Heart right ventricle (tissue), 16 donors: ENCODE measurements at regions of chr14 and their contacts with region 1.

Region 1: GRCh38 chr14:64880221-64881121 is 764 bp upstream of the SPTB start:
- DNase-seq: peak; percentile 35 to 52
- ATAC-seq: peak; percentile 55 to 85 (median 78)
- H3K4me3 ChIP-seq: peak overlapping the region; percentile 51 to 73 (median 64)
- H3K27ac ChIP-seq: peak overlapping the region; percentile 54 to 97 (median 88)
- H3K4me1 ChIP-seq: peaks cover 0 to 36% (median 12%) of the 10 kb centered on the region in 9 donors
- H3K27me3 ChIP-seq: peaks cover 0 to 97% (median 45%) of the 10 kb centered on the region in 7 donors
- CTCF ChIP-seq: no peak

Region 2: GRCh38 chr14:64671591-64671990 is 208.9 kb before region 1 on chr14:
- intact Hi-C with region 1: loop called in 2 of 10 experiments (anchors 10 kb)
- DNase-seq: peak in 1 of 2 donors; percentile 31
- ATAC-seq: peak in 7 of 8 donors; percentile 44 to 76 (median 54)
- H3K4me3 ChIP-seq: no peak overlapping the region
- H3K27ac ChIP-seq: peak overlapping the region in 1 of 10 donors; percentile 22
- H3K4me1 ChIP-seq: peaks cover 0 to 37% (median 0%) of the 10 kb centered on the region in 9 donors
- H3K27me3 ChIP-seq: no peaks in the 10 kb centered on the region
- CTCF ChIP-seq: peak; percentile 59 to 80 (median 77)

Region 3: DNA sequence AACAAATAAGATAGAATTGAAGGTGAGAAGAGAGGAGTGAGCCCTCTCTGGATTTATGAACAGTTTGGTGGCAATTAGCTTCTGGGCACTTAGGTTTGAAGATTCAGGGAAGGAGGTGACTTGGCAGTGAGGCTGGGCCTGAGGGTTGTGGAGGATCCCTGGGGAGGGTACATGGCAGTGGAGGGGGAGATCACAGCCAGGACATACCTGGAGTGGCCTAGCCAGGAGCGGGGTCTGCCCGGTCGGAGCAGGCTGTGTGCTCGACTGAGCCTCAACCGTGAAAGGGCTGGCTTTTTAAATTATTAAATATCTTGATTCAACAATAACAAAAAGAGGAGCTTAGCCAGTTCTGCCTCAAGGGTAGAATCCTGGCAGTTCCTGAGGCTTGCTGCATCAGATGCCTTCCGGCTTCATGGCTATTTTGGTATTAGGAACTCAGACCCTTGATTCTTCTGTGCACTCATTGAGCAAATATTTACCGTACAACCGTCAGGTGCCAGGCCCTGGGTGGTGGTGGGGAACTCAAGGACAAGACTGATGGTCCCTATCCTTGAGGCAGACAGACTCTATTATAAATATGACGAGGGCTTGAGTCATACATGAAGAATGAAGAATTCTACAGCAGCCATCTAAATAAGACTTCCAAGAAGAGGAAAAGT is 74.1 kb before region 1 on chr14:
- intact Hi-C with region 1: loop called in 1 of 10 experiments (anchors 5 kb)
- DNase-seq: no peak
- ATAC-seq: peak in 7 of 8 donors; percentile 27 to 79 (median 66)
- H3K4me3 ChIP-seq: no peak overlapping the region
- H3K27ac ChIP-seq: peak overlapping the region in 8 of 10 donors; percentile 53 to 82 (median 72)
- H3K4me1 ChIP-seq: peaks cover 0 to 35% (median 17%) of the 10 kb centered on the region in 9 donors
- H3K27me3 ChIP-seq: peaks cover 0 to 8% (median 0%) of the 10 kb centered on the region in 7 donors
- CTCF ChIP-seq: no peak

Region 4: DNA sequence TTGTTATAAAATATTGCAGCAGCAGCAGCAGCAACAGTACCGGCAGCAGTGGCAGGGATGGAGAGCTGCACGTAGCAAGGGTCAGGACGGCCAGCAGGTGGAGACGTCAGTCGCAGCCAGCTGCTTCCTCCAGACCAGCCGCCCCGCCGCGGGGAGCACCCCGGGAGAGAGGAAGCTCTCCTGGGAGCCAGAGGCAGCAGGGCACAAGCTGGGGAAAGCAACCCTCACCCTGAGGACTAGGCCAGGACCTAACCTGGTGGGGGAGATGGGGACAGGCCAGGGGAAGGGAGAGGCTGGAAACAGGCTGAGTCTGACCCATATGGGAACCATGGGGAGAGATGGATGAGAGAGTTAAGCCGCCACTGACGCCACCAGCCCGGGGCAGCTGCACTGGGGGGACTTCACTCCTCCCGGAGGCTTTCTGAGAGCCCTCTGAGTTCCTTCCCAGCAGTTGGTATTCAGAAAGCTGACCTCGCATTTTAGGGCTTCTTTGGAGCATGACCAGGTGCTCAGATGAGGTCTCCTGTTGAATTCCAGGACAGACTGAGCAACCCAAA is 57.1 kb before region 1 on chr14:
- intact Hi-C with region 1: loop called in 4 of 10 experiments (anchors 5 kb)
- DNase-seq: peak; percentile 73 to 80
- ATAC-seq: peak; percentile 81 to 91 (median 86)
- H3K4me3 ChIP-seq: peak overlapping the region in 1 of 10 donors; percentile 11
- H3K27ac ChIP-seq: peak overlapping the region in 4 of 10 donors; percentile 18 to 36 (median 24)
- H3K4me1 ChIP-seq: peaks cover 5 to 46% (median 29%) of the 10 kb centered on the region in 9 donors
- H3K27me3 ChIP-seq: peaks cover 0 to 3% (median 0%) of the 10 kb centered on the region in 7 donors
- CTCF ChIP-seq: peak; percentile 34 to 86 (median 79)

Region 5: DNA sequence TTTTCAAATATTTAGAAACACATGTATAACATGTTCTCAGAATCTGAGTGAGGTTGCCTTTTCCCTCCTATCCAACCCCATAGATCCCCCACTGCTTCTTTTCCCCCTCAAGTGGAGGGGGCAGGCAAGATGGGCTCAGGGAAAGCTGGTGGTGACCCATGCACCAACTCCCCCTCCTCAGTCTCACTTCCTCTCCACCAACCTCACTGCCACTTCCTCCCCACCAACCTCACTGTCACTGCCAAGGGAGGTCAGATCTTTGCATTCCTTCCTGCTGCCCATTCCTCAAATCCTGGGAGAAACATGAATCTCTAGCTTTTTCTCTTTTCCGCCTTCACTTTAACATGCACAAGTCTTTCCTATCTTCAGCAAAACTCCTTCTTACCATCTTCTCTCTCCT is 49.5 kb before region 1 on chr14:
- intact Hi-C with region 1: loop called in 3 of 10 experiments (anchors 5 kb)
- DNase-seq: no peak
- ATAC-seq: no peak
- H3K4me3 ChIP-seq: no peak overlapping the region
- H3K27ac ChIP-seq: no peak overlapping the region
- H3K4me1 ChIP-seq: peaks cover 3 to 40% (median 18%) of the 10 kb centered on the region in 9 donors
- H3K27me3 ChIP-seq: no peaks in the 10 kb centered on the region
- CTCF ChIP-seq: no peak

Region 6: DNA sequence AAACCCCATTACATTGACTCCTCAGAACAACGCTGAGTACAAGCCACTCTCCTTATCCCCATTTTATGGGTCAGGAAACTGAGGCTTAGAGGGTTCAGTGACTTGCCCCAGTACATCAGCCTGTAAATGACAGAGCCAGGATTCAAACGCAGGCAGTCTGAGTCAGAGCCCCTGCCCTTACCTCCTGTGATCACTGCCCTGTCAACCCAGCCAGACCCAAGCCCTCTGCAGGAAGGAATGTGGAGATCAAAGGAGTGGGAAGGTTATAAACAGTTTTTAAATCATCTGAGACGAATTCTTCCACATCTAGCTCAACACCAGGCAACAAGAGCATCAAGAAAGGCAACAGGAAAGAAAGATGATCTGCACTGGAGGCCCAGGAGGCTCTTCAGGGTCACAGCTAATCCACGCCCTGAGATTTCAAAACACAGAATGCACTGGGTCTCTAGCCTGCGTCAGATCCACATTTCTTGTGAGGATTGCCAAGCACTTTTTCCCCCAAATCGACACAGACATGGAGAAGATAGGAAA is 39.3 kb before region 1 on chr14:
- intact Hi-C with region 1: loop called in 4 of 10 experiments (anchors 5 kb)
- DNase-seq: peak in 1 of 2 donors; percentile 48
- ATAC-seq: peak; percentile 67 to 89 (median 81)
- H3K4me3 ChIP-seq: peak overlapping the region in 6 of 10 donors; percentile 7 to 37 (median 26)
- H3K27ac ChIP-seq: peak overlapping the region; percentile 43 to 90 (median 83)
- H3K4me1 ChIP-seq: peaks cover 0 to 52% (median 18%) of the 10 kb centered on the region in 9 donors
- H3K27me3 ChIP-seq: peaks cover 0 to 29% (median 8%) of the 10 kb centered on the region in 7 donors
- CTCF ChIP-seq: peak in 7 of 9 donors; percentile 13 to 51 (median 41)